Activated naive CD4-positive, alpha-beta T cell treated with anti-CD3 and anti-CD28 coated beads for 36 hours (primary cell): ENCODE measurements at regions of chr3 and their contacts with region 1.

Region 1: GRCh38 chr3:11271986-11272904 is at the start of gene ATG7:
- DNase-seq: peak; percentile 97
- H3K4me3 Mint-ChIP-seq: peak within 1 kb of the TSS; percentile 93
- H3K27ac Mint-ChIP-seq: peak within 1 kb of the TSS; percentile 93
- H3K4me1 Mint-ChIP-seq: peaks cover 43% of the 10 kb centered on the region
- H3K27me3 Mint-ChIP-seq: no peaks in the 10 kb centered on the region
- total RNA-seq, gene ATG7: 25.9 to 27.0 TPM

Region 2: DNA sequence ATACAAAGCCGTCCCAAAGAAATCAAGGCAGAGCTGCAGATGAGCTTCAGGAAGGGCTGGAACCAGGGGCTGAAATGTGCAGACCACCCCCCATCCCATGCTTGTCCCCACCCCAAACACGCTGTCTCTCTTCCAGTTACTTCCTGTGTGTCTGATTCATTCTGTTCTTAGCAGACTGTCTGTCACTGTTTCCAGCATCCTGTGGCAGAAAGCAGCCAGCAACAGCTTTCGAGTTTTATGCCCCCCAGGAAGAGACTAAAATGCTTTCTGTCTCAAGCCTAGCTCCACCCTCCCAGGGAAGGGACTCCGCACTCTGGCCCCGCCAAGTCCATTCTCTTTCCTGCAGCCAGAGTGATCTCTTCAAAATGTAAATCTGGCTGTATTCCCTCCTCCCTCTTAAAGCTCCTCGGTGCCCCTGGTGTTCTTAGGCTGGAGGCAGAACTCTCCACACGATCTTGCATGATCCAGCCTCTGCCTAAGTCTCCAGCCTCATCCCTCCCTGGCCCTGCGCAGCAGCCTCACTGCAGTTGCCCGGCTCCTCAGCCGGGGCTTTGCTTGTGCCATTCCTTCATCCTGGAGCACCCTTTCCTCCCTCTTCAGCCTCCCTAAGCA is 76.4 kb before region 1 on chr3:
- CTCF ChIA-PET with region 1: no interaction called
- intact Hi-C with region 1: no loop called
- DNase-seq: peak; percentile 49
- H3K4me3 Mint-ChIP-seq: peak overlapping the region; percentile 6
- H3K27ac Mint-ChIP-seq: no peak overlapping the region
- H3K4me1 Mint-ChIP-seq: peaks cover 21% of the 10 kb centered on the region
- H3K27me3 Mint-ChIP-seq: peaks cover 30% of the 10 kb centered on the region

Region 3: GRCh38 chr3:11250902-11251813 is 21.1 kb before region 1 on chr3:
- CTCF ChIA-PET with region 1: interaction called, 4 read pairs
- intact Hi-C with region 1: loop called (anchors 1 kb)
- DNase-seq: peak; percentile 16
- H3K4me3 Mint-ChIP-seq: no peak overlapping the region
- H3K27ac Mint-ChIP-seq: peak overlapping the region; percentile 65
- H3K4me1 Mint-ChIP-seq: peaks cover 17% of the 10 kb centered on the region
- H3K27me3 Mint-ChIP-seq: peaks cover 3% of the 10 kb centered on the region

Region 4: GRCh38 chr3:11288786-11289682 is 16.8 kb after region 1 on chr3:
- CTCF ChIA-PET with region 1: interaction called, 4 read pairs
- intact Hi-C with region 1: loop called (anchors 1 kb)
- DNase-seq: peak; percentile 14
- H3K4me3 Mint-ChIP-seq: no peak overlapping the region
- H3K27ac Mint-ChIP-seq: peak overlapping the region; percentile 84
- H3K4me1 Mint-ChIP-seq: peaks cover 48% of the 10 kb centered on the region
- H3K27me3 Mint-ChIP-seq: no peaks in the 10 kb centered on the region

Region 5: GRCh38 chr3:11306817-11307589 is 34.8 kb after region 1 on chr3:
- CTCF ChIA-PET with region 1: no interaction called
- intact Hi-C with region 1: loop called (anchors 5 kb)
- DNase-seq: peak; percentile 54
- H3K4me3 Mint-ChIP-seq: no peak overlapping the region
- H3K27ac Mint-ChIP-seq: no peak overlapping the region
- H3K4me1 Mint-ChIP-seq: peaks cover 25% of the 10 kb centered on the region
- H3K27me3 Mint-ChIP-seq: no peaks in the 10 kb centered on the region

Region 6: DNA sequence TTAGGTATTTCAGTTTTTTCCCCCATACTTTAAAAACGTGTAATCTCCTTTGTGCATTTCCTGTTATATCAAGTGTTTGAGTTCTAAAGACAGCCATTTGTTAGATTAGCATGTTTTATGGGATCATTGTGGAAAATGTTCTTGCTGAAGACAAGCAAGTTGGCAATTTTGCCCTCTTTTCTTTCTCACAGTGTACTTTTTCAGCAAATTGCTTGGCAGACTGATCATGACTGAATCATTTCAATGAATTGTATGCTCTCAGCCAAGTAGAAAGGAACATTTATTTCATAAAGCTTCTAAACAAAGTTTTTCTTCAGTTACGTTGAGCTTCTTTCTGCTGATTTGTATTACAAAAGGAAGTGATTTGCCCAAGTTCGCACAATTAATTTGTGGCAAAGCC is 51.6 kb after region 1 on chr3:
- CTCF ChIA-PET with region 1: no interaction called
- intact Hi-C with region 1: no loop called
- DNase-seq: no peak
- H3K4me3 Mint-ChIP-seq: no peak overlapping the region
- H3K27ac Mint-ChIP-seq: no peak overlapping the region
- H3K4me1 Mint-ChIP-seq: peaks cover 5% of the 10 kb centered on the region
- H3K27me3 Mint-ChIP-seq: no peaks in the 10 kb centered on the region